ENCODE measurements at regions of chr9 and their contacts with region 1.

Region 1: GRCh38 chr9:71179183-71179582 is 57.8 kb upstream of the TRPM3 start:
- DNase-seq: no peak
- H3K4me3 ChIP-seq: no peak overlapping the region
- H3K27ac ChIP-seq: no peak overlapping the region
- H3K4me1 ChIP-seq: no peaks in the 10 kb centered on the region
- H3K27me3 ChIP-seq: no peaks in the 10 kb centered on the region
- CTCF ChIP-seq: no peak

Region 2: DNA sequence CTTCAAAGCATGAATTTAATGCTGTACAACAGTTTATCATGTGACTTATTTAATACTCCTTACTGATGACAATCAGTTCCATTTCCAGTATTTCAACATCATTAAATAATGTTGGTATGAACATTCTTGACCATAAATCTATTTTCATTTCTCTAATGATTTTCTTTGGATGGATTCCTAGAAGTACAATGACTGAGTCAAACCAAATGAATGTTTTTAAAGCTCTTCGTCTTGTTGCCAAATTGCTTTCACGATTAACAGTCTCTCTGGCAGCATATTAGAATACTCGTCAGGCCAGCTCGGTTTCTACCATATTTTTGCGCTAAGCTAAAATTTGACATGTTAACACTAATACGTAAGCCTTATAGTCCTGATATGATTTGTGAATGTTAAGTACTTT is 254.8 kb before region 1 on chr9:
- CTCF ChIA-PET with region 1: no interaction called
- POLR2A ChIA-PET with region 1: no interaction called
- intact Hi-C with region 1: no loop called
- DNase-seq: no peak
- H3K4me3 ChIP-seq: no peak overlapping the region
- H3K27ac ChIP-seq: no peak overlapping the region
- H3K4me1 ChIP-seq: no peaks in the 10 kb centered on the region
- H3K27me3 ChIP-seq: no peaks in the 10 kb centered on the region
- CTCF ChIP-seq: no peak

Region 3: GRCh38 chr9:71210326-71210725 is 31.1 kb after region 1 on chr9:
- CTCF ChIA-PET with region 1: no interaction called
- POLR2A ChIA-PET with region 1: no interaction called
- intact Hi-C with region 1: loop called (anchors 5 kb)
- DNase-seq: no peak
- H3K4me3 ChIP-seq: no peak overlapping the region
- H3K27ac ChIP-seq: no peak overlapping the region
- H3K4me1 ChIP-seq: no peaks in the 10 kb centered on the region
- H3K27me3 ChIP-seq: no peaks in the 10 kb centered on the region
- CTCF ChIP-seq: no peak

Region 4: DNA sequence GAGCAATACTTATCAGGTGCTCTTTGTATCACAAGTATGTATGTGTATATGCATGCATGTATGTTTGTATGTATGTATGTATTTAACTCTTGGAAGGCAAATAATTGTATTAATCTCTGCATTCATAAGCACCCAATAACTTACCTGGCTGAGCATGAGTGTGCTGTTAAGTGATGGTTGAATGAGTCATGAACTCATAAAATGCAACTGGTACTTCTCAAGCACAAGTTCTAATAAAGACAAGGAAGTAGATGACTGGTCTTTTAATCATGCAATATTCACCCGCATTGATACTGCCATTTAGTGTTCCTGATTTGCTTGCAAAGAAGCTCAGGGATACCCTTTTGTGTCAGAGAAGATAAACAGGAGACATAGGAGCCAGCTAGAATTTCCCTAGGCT is 147.2 kb after region 1 on chr9:
- CTCF ChIA-PET with region 1: no interaction called
- POLR2A ChIA-PET with region 1: no interaction called
- intact Hi-C with region 1: no loop called
- DNase-seq: no peak
- H3K4me3 ChIP-seq: no peak overlapping the region
- H3K27ac ChIP-seq: no peak overlapping the region
- H3K4me1 ChIP-seq: no peaks in the 10 kb centered on the region
- H3K27me3 ChIP-seq: peaks cover 10% of the 10 kb centered on the region
- CTCF ChIP-seq: no peak